Posterior vena cava (tissue), 2 donors: ENCODE measurements at regions of chr3 and their contacts with region 1.

Region 1: DNA sequence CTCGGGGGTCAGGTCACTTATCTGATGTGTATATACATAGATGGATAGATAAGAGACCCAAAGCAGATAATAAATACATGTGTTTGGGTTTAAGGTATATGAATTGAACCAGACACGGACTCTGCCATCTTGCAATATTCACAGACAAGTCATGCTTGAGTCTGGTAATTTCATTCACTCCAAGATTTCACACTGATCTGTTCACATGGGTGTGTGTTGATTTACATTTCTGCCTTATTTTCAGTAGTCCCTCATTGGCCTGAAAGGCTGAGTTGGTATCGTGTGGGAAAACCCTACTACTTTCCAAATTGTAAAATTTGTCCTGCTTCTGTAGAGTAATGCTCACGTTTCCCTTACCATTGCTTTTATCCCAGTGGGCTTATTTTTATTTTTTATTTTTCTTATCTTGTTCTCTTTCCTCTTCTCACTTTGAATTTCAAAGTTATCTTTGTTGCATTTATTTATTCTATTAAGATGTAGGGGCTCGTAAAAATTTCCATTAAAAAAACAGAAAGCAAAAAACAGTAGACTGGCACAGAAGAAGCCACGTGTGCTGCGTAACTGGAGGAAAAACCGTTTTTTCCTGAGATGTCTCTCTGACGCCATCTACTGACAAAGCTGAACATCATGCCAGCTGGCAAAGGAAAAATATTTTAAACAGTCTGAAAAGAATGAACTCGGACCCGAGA is 10.8 kb upstream of the MFSD1 start:
- DNase-seq: no peak

Region 2: DNA sequence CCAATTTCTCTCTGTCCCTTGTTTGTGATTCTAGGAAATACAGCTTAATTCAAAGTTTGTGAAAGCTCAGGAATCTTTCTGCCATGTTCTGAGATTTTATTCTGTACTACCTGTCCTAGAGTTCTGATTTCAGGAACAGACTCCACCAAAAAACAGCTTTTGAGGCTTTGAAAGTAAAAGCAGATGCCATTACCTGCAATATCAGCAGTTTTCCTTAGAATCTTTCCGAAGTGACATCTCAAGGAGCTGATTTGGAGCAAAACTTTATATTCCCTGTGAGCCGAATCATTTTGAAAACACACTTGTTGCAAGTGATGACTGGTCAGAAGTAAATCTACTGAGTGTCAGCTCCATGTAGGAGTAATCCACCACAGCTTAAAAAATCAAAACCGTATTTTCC is 1571.8 kb before region 1 on chr3:
- intact Hi-C with region 1: loop called in 1 of 2 experiments (anchors 5 kb)
- DNase-seq: no peak

Region 3: DNA sequence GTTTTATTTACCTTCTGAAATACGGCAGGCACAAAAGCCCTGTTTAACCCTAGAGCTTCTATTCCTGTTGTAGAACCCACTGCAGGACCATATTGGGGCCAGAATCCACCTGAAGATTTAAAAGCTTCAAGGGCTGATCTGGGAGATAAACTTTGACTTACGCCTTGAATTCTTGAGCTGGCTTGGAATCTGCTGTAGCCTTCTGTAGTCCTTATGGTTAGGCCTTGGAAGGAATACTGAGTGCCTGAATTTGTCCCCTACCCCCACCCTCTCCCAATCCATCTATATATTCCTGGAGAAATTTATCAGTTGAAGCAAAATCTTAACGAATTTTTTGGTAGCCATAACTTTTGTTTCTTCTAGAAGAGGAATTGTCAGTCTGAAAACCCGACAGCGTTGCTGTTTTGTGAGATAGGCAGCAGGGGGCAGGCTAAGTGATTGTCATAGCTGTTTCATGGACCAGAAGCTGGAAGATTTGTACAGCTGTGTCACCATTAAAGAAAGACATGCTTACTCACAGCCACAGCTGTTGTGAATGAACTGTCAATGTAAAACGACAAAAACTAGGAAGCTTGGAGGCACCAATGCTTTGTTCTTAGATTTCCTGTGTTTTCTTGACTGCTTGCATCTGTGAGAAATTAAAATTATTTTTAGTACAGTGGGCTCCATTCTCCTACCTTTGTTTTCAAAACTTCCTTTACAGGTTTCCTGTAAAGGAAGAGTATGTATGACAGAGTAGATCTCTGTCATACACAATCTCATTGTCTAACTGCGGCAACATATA is 131.4 kb before region 1 on chr3:
- intact Hi-C with region 1: loop called (anchors 5 to 10 kb)
- DNase-seq: no peak